ENCODE measurements at regions of chr1 and their contacts with region 1.

Region 1: DNA sequence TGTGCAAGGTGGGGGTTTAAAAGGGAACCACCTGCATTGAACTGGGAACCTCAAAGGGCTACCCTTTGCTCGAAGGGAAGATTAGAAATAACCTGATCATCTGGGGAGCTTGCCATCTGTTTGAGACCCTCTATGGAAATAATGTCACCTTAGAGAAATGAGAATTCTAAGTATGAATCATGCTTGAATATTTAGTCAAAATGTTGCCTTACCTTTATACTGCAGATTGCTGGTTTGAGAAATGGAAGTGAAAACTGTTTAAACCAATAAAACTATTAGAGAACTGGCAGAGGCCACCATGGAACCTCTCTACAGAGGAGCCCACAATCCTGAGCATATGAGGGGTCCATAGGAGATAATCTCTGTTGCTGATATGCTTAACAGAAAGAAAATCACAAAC is 131.2 kb upstream of the FAM78B start:
- DNase-seq: no peak

Region 2: DNA sequence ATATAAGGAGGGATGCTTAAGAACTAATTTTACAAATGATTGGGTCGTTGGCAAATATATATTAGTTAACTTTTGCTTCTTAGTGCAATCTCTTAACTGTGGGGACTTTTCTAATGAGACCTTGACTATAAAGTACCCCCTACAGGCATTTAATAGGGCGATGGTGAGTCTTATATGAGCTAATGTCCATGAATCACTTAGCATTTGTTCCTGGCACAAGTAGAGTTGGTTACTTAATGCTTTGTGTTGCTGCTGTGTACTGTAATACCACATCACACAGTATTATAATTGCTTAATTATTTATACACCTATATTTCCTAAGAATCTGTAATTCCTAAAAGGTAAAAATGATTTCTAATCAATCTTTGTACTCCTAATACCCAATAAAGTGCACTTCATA is 504.0 kb before region 1 on chr1:
- intact Hi-C with region 1: loop called in 1 of 2 experiments (anchors 5 kb)
- DNase-seq: no peak

Region 3: DNA sequence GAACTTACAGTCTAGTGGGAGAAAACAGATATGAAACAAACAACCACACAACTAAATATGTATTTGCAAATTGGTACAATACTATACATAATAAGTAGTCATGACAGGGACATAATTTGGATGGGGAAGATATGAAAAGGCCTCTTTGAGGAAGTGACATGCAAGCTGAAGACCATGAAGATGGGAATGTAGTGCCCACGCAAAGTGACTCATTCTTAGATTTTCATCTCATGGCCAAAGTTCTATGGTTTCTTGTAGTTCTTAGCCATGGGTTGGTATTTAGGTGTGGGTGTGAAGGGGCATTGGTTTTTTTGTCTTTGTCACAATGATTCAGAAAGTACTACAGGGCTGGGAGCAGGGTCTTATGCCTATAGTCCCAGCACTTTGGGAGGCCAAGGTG is 25.8 kb before region 1 on chr1:
- intact Hi-C with region 1: loop called in 1 of 2 experiments (anchors 2 kb)
- DNase-seq: no peak

Measured in posterior vena cava (tissue), 2 donors.